ENCODE measurements at regions of chr1 and their contacts with region 1.

Region 1: DNA sequence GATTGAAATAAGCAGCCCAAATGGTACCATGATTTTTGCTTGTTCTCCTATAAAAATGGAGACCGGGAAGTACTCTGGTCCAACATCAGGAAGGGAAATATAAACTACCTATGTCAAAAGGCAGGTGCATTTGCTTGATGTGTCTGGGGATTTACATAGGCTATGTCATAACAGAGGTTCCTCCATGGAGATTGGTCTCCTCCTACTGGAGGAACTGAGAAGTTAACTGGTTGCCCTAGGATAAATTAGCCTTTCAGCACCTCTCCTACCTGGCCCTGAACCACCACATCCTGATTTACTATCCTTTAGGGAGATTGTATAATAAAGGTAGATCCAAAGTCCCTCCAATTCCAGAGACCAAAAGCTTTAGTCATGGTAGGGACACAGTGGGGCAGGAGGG is 1109.3 kb upstream of the B3GALT2 start:
- DNase-seq: no peak
- H3K4me3 Mint-ChIP-seq: no peak overlapping the region
- H3K27ac Mint-ChIP-seq: no peak overlapping the region
- H3K4me1 Mint-ChIP-seq: peaks cover 49% of the 10 kb centered on the region
- H3K27me3 Mint-ChIP-seq: no peaks in the 10 kb centered on the region

Region 2: DNA sequence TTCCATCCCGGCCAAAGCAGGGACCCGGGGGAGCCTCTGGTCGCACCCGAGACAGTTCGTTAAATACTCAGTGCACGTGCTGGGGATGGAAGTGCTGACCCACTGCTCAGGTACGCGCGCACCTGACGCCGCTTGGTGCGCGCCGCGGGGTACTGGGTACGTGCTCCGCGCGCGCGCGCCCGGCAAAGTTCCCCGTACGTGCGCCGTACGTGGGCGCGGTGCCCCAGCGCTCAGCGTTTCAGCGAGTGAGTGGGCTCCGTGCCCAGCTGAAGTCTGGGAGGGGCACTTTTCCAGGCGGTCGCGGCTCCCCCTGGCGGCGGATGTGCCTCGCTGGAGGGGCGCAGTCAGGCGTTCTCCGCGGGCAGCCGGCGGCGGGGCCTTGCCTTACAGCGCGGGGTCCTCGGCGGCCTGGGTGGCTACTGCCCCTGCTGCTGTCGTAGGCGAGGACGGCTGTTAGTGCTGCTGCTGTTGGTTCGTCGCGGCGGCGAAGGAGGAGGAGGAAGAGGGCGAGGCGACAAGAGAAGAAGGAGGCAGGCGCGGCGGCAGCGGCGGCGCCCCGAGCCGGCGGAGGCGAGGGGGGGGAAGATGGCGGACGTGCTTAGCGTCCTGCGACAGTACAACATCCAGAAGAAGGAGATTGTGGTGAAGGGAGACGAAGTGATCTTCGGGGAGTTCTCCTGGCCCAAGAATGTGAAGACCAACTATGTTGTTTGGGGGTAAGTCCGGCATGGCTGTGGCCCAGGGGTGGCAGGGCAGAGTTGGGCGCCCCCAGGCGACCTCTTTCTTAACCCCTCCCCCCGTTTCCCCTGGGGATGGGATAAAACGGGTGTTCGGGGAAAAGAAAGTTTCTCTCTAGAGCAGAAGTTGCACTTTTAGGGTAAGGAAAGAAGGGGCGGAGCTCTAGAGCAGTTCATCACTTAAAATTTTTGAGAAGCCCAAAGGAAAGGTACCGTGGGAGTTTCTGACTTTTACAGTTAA is 1173.8 kb before region 1 on chr1 and contains the start of gene CDC73:
- CTCF ChIA-PET with region 1: no interaction called
- POLR2A ChIA-PET with region 1: no interaction called
- intact Hi-C with region 1: loop called (anchors 2 kb)
- DNase-seq: peak; percentile 99
- H3K4me3 Mint-ChIP-seq: peak within 1 kb of the TSS; percentile 85
- H3K27ac Mint-ChIP-seq: peak within 1 kb of the TSS; percentile 98
- H3K4me1 Mint-ChIP-seq: peaks cover 45% of the 10 kb centered on the region
- H3K27me3 Mint-ChIP-seq: no peaks in the 10 kb centered on the region
- total RNA-seq, gene CDC73: 47.9 to 49.3 TPM

Region 3: DNA sequence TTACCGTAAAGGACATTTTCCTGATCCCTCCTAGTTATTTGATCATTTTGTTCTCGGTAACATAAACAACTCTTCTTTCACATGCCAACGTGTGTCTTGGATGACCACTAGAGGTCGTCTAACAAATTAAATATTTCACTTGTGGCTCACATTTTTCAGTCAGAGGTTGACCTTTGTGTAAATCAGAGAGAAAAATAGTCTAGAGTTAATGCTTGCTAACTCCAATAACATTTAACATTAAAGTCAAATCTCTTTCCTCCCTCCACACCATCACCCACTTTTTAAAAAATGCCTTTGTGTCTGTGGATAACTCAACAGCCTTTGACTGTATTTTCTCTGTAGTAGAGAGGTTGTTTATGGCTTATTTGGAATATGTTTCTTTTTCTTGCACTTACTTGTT is 888.8 kb before region 1 on chr1:
- CTCF ChIA-PET with region 1: no interaction called
- POLR2A ChIA-PET with region 1: no interaction called
- intact Hi-C with region 1: loop called (anchors 2 kb)
- DNase-seq: no peak
- H3K4me3 Mint-ChIP-seq: no peak overlapping the region
- H3K27ac Mint-ChIP-seq: no peak overlapping the region
- H3K4me1 Mint-ChIP-seq: peaks cover 29% of the 10 kb centered on the region
- H3K27me3 Mint-ChIP-seq: no peaks in the 10 kb centered on the region

Region 4: DNA sequence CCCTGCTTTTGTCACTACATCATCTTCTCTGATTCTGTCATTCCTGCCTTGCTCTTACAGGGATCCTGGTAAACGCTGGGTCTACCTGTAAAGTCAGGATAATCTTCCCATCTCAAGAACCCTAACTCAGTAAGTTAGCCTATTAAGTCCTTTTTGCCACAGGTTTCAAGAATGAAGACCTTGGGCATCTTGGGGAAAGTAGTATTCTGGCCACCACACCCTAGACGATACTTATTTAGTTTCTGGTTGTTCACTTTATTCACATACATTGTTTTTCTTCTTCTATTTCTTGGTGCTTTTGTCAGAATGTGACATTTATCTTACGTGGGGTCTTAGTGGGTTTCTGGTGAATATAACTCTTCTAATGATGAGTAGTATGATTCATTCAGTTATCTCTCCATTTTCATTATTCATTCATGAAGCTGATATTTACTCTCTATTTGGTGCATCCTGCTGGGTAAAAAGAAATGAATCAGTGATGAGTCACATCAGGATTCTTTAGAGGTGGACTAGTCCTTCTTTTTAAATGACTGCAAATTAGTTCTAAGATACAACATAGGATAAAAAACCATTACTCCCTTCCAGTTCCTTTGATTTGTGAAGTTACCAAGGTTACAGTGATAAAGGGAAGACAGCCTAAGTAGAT is 594.9 kb before region 1 on chr1:
- CTCF ChIA-PET with region 1: no interaction called
- POLR2A ChIA-PET with region 1: no interaction called
- intact Hi-C with region 1: loop called (anchors 2 kb)
- DNase-seq: no peak
- H3K4me3 Mint-ChIP-seq: no peak overlapping the region
- H3K27ac Mint-ChIP-seq: peak overlapping the region; percentile 40
- H3K4me1 Mint-ChIP-seq: peaks cover 21% of the 10 kb centered on the region
- H3K27me3 Mint-ChIP-seq: no peaks in the 10 kb centered on the region

Region 5: DNA sequence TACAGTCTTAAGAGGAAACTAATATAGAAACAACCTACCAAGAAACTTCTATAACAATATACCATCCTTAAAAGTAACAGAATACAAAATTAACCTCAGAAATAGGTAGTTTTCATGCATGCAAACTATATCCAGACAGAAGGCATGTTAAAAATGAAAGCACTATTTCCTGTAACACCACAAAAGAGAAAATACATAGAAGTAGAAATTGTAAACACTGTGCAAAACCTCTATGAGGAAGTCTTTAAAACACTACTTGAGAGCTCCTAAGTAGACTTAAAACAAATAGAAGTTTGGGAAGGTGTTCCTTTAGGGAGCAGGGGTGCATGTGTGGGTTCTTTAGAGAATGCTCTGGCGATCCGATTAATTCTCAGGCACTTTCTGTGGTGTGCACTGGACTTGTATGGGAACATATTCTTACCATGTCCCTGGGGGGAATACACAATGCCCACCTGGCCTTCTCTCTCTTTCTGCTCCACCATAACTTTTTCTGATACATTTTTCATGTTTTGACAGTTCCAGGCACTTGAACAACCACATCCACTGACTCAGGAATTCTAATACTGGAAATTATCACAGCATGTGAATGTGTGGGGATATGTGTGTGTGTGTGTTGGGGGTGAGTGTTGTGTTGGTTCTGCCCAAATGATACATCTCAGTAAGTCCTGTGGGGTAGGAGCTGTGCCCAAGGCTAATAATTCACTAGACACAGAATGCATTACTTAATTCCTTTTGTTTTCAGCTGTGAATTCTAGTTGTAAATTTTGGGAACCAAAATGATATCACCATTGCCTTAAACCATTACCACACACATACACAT is 243.0 kb before region 1 on chr1:
- CTCF ChIA-PET with region 1: no interaction called
- POLR2A ChIA-PET with region 1: no interaction called
- intact Hi-C with region 1: loop called (anchors 5 kb)
- DNase-seq: no peak
- H3K4me3 Mint-ChIP-seq: peak overlapping the region; percentile 27
- H3K27ac Mint-ChIP-seq: peak overlapping the region; percentile 65
- H3K4me1 Mint-ChIP-seq: peaks cover 52% of the 10 kb centered on the region
- H3K27me3 Mint-ChIP-seq: no peaks in the 10 kb centered on the region

Region 6: GRCh38 chr1:194159940-194160339 is 135.7 kb before region 1 on chr1:
- CTCF ChIA-PET with region 1: no interaction called
- POLR2A ChIA-PET with region 1: no interaction called
- intact Hi-C with region 1: loop called (anchors 2 kb)
- DNase-seq: no peak
- H3K4me3 Mint-ChIP-seq: no peak overlapping the region
- H3K27ac Mint-ChIP-seq: no peak overlapping the region
- H3K4me1 Mint-ChIP-seq: no peaks in the 10 kb centered on the region
- H3K27me3 Mint-ChIP-seq: no peaks in the 10 kb centered on the region

Region 7: DNA sequence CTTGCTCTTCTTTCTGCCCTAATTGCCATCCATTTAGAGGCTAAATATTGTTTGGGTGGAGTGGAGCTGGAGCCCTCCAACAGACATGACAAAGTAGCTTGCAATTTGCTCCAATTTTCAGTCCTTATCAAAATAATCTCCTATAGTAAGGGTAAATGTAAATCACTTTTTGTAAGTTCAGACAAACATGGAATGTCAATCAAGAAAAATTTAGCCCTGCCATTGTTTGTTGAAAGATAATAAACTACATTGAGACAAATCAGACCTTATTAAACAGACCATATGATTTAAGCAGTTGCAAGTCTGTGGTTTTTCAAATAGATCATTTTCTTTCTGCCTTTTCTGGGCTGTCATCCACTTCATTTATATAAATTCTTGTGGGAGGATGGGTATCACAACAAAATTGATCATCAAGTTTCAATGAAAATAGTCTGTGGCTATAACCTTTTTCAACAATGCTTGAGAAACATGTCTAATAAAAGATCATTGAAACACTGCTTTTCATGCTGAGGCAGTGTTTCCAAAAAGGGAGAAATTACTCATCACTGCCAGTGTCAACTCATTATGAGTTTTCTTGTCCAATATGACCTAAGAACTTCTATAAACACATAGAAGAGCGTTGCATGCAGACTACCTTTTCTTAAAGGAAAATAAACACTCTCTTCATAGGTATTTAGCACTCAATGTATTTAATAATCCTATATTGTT is 42.7 kb after region 1 on chr1:
- CTCF ChIA-PET with region 1: no interaction called
- POLR2A ChIA-PET with region 1: no interaction called
- intact Hi-C with region 1: loop called (anchors 2 kb)
- DNase-seq: no peak
- H3K4me3 Mint-ChIP-seq: no peak overlapping the region
- H3K27ac Mint-ChIP-seq: no peak overlapping the region
- H3K4me1 Mint-ChIP-seq: peaks cover 10% of the 10 kb centered on the region
- H3K27me3 Mint-ChIP-seq: no peaks in the 10 kb centered on the region

Measured in activated CD4-positive, alpha-beta memory T cell treated with anti-CD3 and anti-CD28 coated beads for 36 hours (primary cell).